ENCODE measurements at regions of chr10 and their contacts with region 1.

Region 1: DNA sequence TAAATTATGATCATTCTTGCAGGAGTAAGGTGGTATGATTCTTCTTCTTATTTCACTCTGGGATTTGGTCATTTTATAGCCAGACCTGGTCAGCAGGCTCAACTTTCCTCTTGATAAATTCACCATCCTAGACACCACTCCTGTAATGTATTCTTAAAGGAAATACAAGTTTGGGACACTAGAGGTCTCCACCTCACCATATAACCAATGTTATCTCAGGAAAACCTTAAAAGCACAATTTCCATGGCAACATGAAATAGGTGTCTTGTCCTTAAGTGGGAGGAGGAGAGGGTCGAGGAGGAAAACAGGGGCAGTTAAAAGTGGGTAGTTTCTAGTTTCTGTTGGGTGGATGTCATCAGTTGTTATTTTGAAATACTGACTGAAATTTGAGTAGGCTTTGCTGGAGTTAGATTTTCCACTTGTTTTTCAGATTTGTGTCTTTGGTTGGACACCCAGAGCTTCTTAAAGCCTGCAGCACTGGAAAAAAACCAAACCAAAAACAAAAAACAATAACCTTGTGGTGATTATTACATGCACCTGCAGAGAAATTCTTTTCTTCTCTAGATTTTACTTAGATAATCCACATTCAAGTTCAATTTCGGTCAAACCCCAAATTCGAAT is 163.1 kb downstream of the PRKCQ start:
- DNase-seq: peak; percentile 31
- H3K4me3 ChIP-seq: no peak overlapping the region
- H3K27ac ChIP-seq: no peak overlapping the region
- H3K4me1 ChIP-seq: no peaks in the 10 kb centered on the region
- H3K27me3 ChIP-seq: no peaks in the 10 kb centered on the region
- CTCF ChIP-seq: peak; percentile 64 to 70

Region 2: DNA sequence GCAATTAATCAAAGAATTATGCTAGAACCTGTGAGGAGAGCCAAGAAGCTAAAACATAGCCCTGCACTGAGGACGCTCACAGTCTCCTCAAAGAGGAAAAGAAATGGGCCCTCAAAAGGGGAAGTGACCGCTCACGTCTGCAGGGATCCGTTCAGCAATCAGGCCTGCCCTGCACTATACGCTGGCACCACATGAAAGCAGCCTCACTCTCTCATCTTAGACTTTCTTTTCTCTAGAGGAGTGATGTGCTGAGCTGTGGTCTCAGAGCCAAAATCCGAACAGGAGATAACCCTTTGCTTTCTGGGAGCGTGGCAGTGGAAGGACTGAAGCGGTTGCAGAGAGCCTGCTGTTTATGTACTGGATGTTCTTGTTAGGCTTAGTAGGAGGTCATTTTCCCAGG is 348.6 kb before region 1 on chr10:
- CTCF ChIA-PET with region 1: no interaction called
- dilution Hi-C with region 1: no loop called
- in situ Hi-C with region 1: no loop called
- intact Hi-C with region 1: no loop called
- DNase-seq: no peak
- H3K4me3 ChIP-seq: no peak overlapping the region
- H3K27ac ChIP-seq: no peak overlapping the region
- H3K4me1 ChIP-seq: no peaks in the 10 kb centered on the region
- H3K27me3 ChIP-seq: no peaks in the 10 kb centered on the region
- CTCF ChIP-seq: no peak

Region 3: DNA sequence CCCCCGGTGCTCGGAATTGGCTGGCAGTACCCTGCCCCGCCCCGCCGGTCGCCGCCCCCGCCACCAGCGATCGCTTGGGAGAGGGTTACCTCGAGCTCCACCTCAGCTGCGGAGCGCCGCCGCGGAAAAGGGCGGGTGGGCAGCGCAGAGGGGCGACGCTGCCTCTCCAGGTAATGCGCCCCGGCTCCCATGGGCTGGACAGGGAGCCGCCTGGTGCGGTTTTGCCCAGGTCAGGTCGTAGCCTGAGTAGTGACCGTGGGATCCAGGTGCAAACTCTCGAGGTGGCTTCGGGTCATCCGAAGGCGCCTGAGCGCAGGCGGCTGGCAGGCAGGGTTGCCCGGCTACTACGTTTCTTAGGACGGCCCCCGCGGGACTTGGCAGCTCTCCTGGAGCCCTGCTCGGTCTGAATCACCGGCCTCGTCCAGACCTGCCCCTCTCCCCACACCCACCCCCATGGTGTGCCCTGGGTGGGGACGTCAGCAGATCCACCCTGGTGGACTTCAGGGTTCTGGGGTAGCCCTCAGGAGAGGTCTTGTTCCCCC is 212.9 kb before region 1 on chr10:
- CTCF ChIA-PET with region 1: no interaction called
- dilution Hi-C with region 1: no loop called
- in situ Hi-C with region 1: no loop called
- intact Hi-C with region 1: no loop called
- DNase-seq: peak; percentile 91
- H3K4me3 ChIP-seq: peak overlapping the region; percentile 60 to 98 (median 94)
- H3K27ac ChIP-seq: peak overlapping the region; percentile 90
- H3K4me1 ChIP-seq: peaks cover 28% of the 10 kb centered on the region
- H3K27me3 ChIP-seq: no peaks in the 10 kb centered on the region
- CTCF ChIP-seq: no peak

Region 4: DNA sequence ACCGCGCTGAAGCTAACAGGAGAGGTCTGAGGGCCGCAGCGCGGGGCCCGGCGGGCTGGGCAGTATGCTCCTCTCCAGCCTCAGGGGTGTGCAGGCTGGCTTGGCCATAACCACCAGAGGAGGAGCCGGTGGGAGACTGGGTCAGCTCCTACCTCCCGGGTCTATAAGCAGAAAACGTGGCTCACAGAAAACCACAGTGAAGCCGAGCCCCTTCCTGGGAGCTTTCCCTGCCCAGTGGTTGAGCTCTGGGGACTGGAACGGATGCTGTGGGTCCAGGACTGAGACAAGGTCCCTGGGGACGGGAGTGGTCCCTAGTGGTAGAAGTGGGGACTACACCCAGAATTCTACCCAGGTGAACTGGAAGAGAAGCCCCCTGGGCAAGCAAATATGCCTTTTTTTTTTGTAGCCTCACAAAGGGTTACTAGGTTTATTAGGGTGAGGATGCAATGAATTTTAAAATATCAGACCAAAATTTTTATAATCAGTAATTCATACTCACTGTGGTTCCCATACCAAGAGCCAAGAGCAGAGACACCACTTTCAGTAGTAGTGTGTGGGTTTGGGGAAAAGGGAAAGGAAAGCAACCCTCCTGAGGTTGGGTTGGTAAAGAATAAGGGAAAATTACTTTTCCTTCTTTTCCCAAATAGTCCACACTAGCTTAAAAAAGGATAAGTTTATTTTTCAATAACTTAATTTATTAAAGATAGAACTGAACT is 231.0 kb after region 1 on chr10:
- CTCF ChIA-PET with region 1: no interaction called
- dilution Hi-C with region 1: no loop called
- in situ Hi-C with region 1: no loop called
- intact Hi-C with region 1: loop called (anchors 1 kb)
- DNase-seq: peak; percentile 43
- H3K4me3 ChIP-seq: no peak overlapping the region
- H3K27ac ChIP-seq: no peak overlapping the region
- H3K4me1 ChIP-seq: no peaks in the 10 kb centered on the region
- H3K27me3 ChIP-seq: no peaks in the 10 kb centered on the region
- CTCF ChIP-seq: peak; percentile 81 to 93

Region 5: GRCh38 chr10:7417103-7417623 is 1000.2 kb after region 1 on chr10:
- CTCF ChIA-PET with region 1: no interaction called
- dilution Hi-C with region 1: no loop called
- in situ Hi-C with region 1: loop called (anchors 10 kb)
- intact Hi-C with region 1: loop called (anchors 2 kb)
- DNase-seq: no peak
- H3K4me3 ChIP-seq: no peak overlapping the region
- H3K27ac ChIP-seq: no peak overlapping the region
- H3K4me1 ChIP-seq: no peaks in the 10 kb centered on the region
- H3K27me3 ChIP-seq: peaks cover 16% of the 10 kb centered on the region
- CTCF ChIP-seq: peak in 1 of 2 donors; percentile 48